ENCODE measurements at regions of chr10 and their contacts with region 1.

Region 1: DNA sequence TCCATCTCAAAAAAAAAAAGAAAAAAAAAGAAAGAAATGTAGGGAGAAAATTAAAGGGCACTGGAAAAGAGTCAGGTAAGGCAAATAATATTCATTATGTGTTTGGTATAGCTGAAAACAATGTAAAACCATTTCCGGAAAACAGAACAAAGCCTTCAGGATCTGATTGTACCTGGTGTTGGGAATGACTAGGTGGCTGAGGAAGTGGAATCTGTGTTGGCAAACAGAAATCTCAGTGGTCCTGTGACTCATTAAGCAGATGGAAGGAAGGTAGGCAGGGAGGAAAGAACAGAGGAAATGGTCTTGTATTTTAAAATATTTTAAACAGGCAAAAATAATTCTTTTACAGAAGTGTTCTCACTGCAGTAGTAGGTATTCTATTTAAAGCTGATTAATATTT is 55.7 kb upstream of the GATA3 start:
- DNase-seq: no peak
- ATAC-seq: no peak
- H3K4me3 ChIP-seq: no peak overlapping the region
- H3K4me3 Mint-ChIP-seq: no peak overlapping the region
- H3K27ac ChIP-seq: no peak overlapping the region
- H3K27ac Mint-ChIP-seq: no peak overlapping the region
- H3K4me1 ChIP-seq: no peaks in the 10 kb centered on the region
- H3K4me1 Mint-ChIP-seq: peaks cover 0 to 3% (median 0%) of the 10 kb centered on the region in 3 donors
- H3K27me3 ChIP-seq: no peaks in the 10 kb centered on the region
- H3K27me3 Mint-ChIP-seq: no peaks in the 10 kb centered on the region

Region 2: DNA sequence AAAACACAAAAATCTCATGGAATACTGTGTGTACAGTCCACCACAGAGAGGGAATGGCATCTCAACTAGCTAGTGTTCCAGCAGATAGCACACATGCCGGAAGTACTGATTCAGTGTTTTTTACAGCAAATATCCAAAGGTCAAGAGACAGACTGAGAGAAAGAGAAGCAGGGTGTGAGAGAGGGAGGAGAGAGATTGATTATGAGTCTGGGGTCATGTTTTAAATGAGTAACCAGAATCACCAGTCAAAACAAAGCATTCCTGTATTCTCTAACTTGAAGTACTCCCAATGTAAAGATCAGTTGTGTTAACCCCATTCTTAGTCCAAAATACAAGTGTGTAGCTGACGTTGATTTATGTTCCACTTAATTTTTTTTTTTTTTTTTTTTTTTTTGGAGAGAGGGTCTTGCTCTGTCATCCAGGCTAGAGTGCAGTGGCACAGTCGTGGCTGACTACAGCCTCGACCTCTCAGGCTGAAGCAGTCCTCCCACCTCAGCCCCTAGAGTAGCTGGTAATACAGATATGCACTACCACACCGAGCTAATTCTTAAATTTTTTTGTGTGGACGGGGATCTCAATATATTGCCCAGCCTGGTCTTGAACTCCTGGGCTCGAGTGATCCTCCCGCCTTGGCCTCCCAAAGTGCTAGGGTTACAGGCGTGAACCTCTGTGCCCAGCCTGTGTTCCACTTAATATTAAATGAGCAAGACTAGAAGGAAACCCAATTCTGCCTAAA is 66.4 kb before region 1 on chr10:
- CTCF ChIA-PET with region 1: interaction called in 1 of 2 experiments, 5 read pairs
- POLR2A ChIA-PET with region 1: interaction called in 1 of 2 experiments, 12 read pairs
- DNase-seq: no peak
- ATAC-seq: no peak
- H3K4me3 ChIP-seq: no peak overlapping the region
- H3K4me3 Mint-ChIP-seq: no peak overlapping the region
- H3K27ac ChIP-seq: no peak overlapping the region
- H3K27ac Mint-ChIP-seq: no peak overlapping the region
- H3K4me1 ChIP-seq: no peaks in the 10 kb centered on the region
- H3K4me1 Mint-ChIP-seq: peaks cover 16 to 31% (median 19%) of the 10 kb centered on the region in 3 donors
- H3K27me3 ChIP-seq: no peaks in the 10 kb centered on the region
- H3K27me3 Mint-ChIP-seq: no peaks in the 10 kb centered on the region

Region 3: DNA sequence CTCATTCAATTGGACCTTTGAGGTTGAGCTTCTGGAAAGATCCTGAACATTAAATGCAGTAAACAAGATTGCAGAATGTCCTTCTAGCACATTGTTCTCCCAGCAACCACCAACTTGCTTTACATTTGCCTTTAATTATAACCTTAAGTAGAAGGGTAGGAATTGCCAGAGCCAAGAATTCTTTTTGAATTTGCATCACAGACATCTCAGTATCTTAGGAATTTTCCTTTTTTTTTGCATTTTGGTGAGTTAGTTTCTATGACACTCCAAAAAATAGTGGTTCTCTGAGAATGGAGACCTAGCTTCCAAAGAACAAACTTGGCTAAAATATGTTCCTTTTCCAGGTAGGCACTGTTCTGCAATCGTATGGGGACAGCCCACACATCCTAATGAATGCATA is 511.6 kb after region 1 on chr10:
- CTCF ChIA-PET with region 1: no interaction called
- POLR2A ChIA-PET with region 1: interaction called in 1 of 2 experiments, 10 read pairs
- DNase-seq: no peak
- ATAC-seq: no peak
- H3K4me3 ChIP-seq: no peak overlapping the region
- H3K4me3 Mint-ChIP-seq: no peak overlapping the region
- H3K27ac ChIP-seq: no peak overlapping the region
- H3K27ac Mint-ChIP-seq: no peak overlapping the region
- H3K4me1 ChIP-seq: no peaks in the 10 kb centered on the region
- H3K4me1 Mint-ChIP-seq: no peaks in the 10 kb centered on the region
- H3K27me3 ChIP-seq: peaks cover 0 to 18% of the 10 kb centered on the region in 2 experiments
- H3K27me3 Mint-ChIP-seq: peaks cover 17 to 30% of the 10 kb centered on the region in 2 donors